ENCODE measurements at regions of chr2 and their contacts with region 1.

Region 1: GRCh38 chr2:127324635-127325034 is 30.7 kb upstream of the ERCC3 start:
- DNase-seq: no peak
- ATAC-seq: no peak

Region 2: GRCh38 chr2:127415593-127416505 is 91.2 kb after region 1 on chr2:
- intact Hi-C with region 1: loop called (anchors 5 kb)
- DNase-seq: peak; percentile 87
- ATAC-seq: peak; percentile 72

Region 3: GRCh38 chr2:127479219-127479825 is 154.7 kb after region 1 on chr2:
- intact Hi-C with region 1: loop called (anchors 2 kb)
- DNase-seq: no peak
- ATAC-seq: no peak